ENCODE measurements at regions of chr10 and their contacts with region 1.

Region 1: DNA sequence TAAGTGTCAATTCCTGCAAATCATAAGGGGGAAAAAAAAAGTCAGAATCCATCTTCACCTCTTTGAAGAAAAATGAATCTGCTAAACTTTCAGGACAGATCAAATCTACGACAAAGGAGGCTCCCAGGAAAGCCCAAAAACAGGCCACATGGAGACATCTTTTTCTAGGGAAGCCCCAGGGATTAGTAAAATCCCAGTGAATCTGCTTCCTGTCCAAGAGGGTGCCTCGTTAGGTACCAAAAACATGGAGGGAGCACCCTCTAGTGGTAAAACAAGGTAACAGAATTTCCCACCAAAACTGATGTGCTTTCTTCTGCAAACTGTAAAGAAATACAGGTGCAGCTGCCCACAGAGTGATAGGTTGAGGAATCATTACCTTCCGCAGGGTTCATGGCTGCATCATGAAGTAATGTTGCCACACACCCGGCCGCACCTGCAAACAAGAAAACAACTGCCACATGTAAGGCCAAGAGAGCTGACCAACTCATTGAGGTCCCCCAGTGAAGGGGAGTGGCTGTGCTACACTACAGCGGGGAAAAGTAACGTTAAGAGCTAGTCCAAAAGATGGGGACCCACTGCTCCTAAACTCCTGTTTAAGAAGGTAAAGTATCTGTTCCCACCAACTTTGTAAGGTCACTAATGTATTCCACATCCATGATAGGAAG is 7.9 kb downstream of the SLC25A28 start:
- DNase-seq: peak; percentile 38
- H3K4me3 Mint-ChIP-seq: no peak overlapping the region
- H3K27ac Mint-ChIP-seq: no peak overlapping the region
- H3K4me1 Mint-ChIP-seq: no peaks in the 10 kb centered on the region
- H3K27me3 Mint-ChIP-seq: no peaks in the 10 kb centered on the region
- CTCF ChIP-seq: peak; percentile 43

Region 2: DNA sequence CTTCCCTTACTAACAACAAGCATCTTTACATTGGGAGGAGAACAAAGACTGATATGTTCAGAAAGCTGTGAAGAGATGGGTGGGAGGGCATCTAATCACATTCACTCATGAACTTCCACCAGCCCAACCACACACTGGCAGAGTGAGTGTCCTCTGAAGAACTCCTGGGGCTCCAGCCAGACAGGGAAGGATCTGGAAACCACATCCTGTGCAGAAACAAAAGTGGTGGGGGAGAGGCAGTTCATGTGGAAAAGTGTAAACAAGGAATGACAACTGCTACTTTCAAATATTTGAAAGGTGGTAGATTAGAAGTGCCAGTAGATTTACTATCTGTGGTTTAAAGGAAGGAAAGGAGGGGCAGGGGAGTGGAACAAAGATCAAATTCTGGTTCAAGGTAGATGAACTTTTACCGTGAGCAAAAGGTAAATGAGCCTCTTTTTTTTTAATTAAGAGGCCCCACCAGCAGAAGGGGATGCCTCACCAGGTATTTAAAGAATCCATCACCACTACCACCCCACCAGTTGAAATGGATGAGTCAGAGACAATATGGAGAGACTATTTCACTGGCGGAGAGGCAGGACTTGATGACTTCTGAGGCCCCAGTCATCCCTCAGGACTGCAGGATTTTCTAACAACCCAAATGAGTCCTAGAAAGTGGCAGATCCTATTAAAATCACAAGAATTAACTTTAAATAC is 216.4 kb before region 1 on chr10:
- CTCF ChIA-PET with region 1: no interaction called
- intact Hi-C with region 1: loop called (anchors 2 kb)
- DNase-seq: no peak
- H3K4me3 Mint-ChIP-seq: peak overlapping the region; percentile 12
- H3K27ac Mint-ChIP-seq: peak overlapping the region; percentile 54
- H3K4me1 Mint-ChIP-seq: peaks cover 11% of the 10 kb centered on the region
- H3K27me3 Mint-ChIP-seq: no peaks in the 10 kb centered on the region
- CTCF ChIP-seq: no peak

Region 3: GRCh38 chr10:99435986-99436638 is 176.2 kb before region 1 on chr10:
- CTCF ChIA-PET with region 1: interaction called, 4 read pairs
- intact Hi-C with region 1: loop called (anchors 1 kb)
- DNase-seq: peak; percentile 6
- H3K4me3 Mint-ChIP-seq: no peak overlapping the region
- H3K27ac Mint-ChIP-seq: no peak overlapping the region
- H3K4me1 Mint-ChIP-seq: no peaks in the 10 kb centered on the region
- H3K27me3 Mint-ChIP-seq: no peaks in the 10 kb centered on the region
- CTCF ChIP-seq: peak; percentile 26

Region 4: GRCh38 chr10:99560277-99561126 is 51.8 kb before region 1 on chr10:
- CTCF ChIA-PET with region 1: interaction called, 3 read pairs
- intact Hi-C with region 1: loop called (anchors 1 kb)
- DNase-seq: peak; percentile 56
- H3K4me3 Mint-ChIP-seq: no peak overlapping the region
- H3K27ac Mint-ChIP-seq: no peak overlapping the region
- H3K4me1 Mint-ChIP-seq: no peaks in the 10 kb centered on the region
- H3K27me3 Mint-ChIP-seq: peaks cover 14% of the 10 kb centered on the region
- CTCF ChIP-seq: peak; percentile 69

Region 5: DNA sequence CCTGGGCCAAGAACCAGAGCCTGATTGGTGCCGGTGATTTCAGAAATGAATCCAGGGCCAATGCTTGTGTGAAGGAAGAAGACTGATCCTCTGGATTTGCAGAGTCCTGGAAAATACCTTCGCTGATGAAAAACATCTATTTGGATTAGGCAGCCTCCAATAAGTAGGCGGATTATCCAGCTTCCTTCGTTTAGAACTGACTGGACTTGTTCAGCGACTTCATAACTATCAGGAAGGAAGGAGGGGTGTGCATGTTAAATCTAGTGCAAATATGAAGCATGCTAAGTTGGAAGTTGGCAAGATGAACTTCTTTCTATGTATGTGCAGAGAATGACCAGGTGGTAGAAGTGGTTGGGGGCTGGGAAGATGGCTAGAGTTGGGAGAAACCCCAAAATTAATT is 38.5 kb before region 1 on chr10:
- CTCF ChIA-PET with region 1: no interaction called
- intact Hi-C with region 1: loop called (anchors 1 kb)
- DNase-seq: no peak
- H3K4me3 Mint-ChIP-seq: no peak overlapping the region
- H3K27ac Mint-ChIP-seq: no peak overlapping the region
- H3K4me1 Mint-ChIP-seq: no peaks in the 10 kb centered on the region
- H3K27me3 Mint-ChIP-seq: peaks cover 34% of the 10 kb centered on the region
- CTCF ChIP-seq: no peak

Measured in Calu3 (cell line).